Prostate gland (tissue), 2 donors: ENCODE measurements at regions of chr10 and their contacts with region 1.

Region 1: DNA sequence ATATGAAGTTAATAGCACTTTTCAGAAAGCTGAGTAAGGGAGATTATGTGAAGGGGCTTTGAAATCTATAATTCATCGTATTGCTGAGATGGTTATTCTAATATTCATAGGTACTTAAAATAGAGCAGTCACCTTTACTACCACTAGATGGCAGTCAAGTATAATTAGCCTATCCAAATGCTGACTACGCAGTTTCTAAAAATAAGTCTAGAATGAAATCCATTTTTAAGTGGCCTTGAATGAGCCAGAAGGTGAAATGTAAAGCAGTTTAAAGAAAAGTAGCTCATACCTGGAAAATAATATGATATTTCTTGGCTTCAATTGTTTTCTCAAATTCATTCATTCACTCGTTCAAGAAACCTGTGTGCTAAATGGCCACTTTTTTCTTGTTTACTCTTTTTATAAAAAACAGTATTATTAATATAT is 1277.1 kb downstream of the GATA3 start:
- DNase-seq: no peak
- H3K4me3 ChIP-seq: no peak overlapping the region
- H3K27ac ChIP-seq: no peak overlapping the region
- H3K4me1 ChIP-seq: no peaks in the 10 kb centered on the region
- H3K27me3 ChIP-seq: no peaks in the 10 kb centered on the region
- CTCF ChIP-seq: peak; percentile 47 to 81 (median 77)
- POLR2A ChIP-seq: no peak

Region 2: DNA sequence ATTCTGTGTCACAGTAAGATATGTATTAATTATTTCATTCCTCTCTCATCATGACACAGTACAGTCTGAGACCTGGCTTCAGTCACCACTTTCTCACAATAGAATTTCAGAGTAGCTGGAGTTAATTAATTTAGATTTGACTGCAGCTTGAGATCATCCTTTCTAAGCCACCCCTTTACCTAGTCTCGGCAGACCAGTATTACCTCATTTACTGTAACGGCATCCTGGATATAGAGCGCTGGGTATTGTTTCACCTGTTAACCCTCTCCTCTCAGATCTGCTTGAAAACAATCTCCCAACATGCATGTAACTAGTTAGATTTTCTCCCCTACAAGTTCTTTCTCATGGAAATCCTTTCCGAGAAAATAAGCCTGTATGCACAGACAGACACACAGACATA is 219.6 kb before region 1 on chr10:
- intact Hi-C with region 1: no loop called
- DNase-seq: no peak
- H3K4me3 ChIP-seq: no peak overlapping the region
- H3K27ac ChIP-seq: no peak overlapping the region
- H3K4me1 ChIP-seq: no peaks in the 10 kb centered on the region
- H3K27me3 ChIP-seq: no peaks in the 10 kb centered on the region
- CTCF ChIP-seq: no peak
- POLR2A ChIP-seq: no peak

Region 3: DNA sequence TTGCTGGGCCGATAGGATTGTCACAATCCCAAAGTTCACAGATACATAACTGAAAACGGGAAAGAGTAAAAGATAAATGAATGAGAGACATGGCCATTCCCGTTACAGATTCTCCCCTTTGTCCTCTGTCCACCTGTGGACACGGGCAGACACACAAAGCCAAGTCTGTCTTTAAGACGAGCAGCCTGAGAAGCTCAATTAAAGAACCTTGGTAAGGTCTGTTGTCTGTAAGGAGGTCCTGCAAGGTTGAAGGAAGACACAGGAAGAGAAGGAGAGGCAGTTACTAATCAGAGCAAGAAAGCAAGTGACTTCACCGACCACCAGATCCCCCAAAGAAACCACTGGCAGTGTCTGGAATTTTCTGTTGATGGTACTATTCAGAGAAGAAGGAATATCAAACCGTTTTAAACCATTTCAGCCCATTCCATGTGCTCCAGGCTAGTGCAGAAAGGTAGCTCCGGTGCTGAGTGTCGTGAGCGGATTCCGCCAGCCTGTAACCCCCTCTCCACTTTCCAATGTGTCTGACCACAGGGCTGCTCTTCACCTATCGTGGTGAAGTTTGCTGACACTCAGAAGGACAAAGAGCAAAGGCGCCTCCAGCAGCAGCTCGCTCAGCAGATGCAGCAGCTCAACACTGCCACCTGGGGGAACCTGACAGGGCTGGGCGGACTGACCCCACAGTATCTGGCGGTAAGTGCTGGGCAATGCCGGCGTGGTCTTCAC is 1938.7 kb after region 1 on chr10:
- intact Hi-C with region 1: loop called (anchors 10 kb)
- DNase-seq: peak; percentile 70
- H3K4me3 ChIP-seq: no peak overlapping the region
- H3K27ac ChIP-seq: no peak overlapping the region
- H3K4me1 ChIP-seq: no peaks in the 10 kb centered on the region
- H3K27me3 ChIP-seq: no peaks in the 10 kb centered on the region
- CTCF ChIP-seq: peak; percentile 71 to 85 (median 80)
- POLR2A ChIP-seq: no peak